Panc1 (cell line): ENCODE measurements at regions of chr6 and their contacts with region 1.

Region 1: DNA sequence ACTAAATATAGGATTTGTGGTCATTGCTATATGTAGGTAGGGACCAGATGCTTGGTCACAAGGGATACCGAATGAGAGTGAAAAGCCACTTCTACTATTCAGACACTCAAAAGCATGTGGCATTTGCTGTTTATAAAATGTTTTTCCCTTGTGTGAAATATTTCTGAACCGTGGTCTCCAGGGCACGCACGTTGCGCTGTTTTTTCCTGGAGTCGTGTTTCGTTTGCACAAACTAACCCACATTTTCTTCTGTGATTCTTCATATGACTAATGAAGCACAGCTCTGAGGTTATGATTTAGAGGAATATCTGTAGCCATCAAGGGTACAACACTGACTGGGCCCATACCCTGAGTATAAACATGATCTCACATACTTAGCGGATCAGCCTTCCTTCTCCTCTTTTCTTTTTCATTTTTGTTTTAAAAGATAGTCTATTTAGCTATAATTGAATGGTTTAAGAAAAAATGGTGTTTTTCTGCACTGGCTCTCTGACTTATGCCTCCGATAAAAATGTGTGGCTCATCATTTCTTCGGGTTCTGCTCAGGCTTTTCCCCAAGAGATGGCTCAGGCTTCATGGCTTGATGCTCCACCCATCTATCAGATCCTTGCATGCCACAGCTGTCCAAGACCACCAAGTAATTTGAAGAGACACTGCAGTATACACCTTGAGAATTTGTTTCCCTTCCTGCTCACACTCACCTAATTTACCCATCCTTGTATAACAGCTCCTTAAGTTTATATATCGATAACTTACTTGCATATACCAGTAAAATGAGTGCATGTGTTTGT is 59.9 kb upstream of the HBS1L start:
- DNase-seq: no peak
- ATAC-seq: no peak
- H3K4me3 ChIP-seq: no peak overlapping the region
- H3K27ac ChIP-seq: no peak overlapping the region
- H3K4me1 ChIP-seq: no peaks in the 10 kb centered on the region
- H3K27me3 ChIP-seq: peaks cover 4% of the 10 kb centered on the region; the same call in 1 of the 2 replicates
- CTCF ChIP-seq: no peak

Region 2: DNA sequence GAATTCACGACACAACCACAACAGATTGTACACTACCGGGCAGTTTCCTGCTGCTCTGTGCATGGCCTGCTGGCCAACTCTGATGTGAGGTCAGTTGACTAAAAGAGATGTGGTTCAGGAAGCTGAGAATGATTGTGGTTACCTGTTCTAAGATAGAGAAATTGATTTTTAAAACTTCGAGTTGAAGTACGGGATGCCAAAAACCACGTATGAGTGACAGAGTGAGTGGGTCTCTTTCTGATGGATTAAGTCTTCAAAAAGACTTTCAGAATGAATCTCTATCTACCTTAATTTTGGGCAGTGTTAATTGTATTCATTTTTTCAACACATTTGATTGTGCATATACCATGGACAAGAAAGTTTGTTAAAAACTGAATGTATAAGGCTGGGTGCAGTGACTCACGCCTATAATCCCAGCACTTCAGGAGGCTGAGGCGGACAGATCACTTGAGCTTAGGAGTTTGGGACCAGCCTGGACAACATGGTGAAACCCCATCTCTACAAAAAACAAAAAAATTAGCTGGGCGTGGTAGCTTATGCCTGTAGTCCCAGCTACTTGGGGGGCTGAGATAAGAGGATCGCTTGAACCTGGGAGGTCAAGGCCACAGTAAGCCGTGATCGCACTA is 917.9 kb before region 1 on chr6:
- CTCF ChIA-PET with region 1: no interaction called
- POLR2A ChIA-PET with region 1: interaction called, 16 read pairs
- in situ Hi-C with region 1: no loop called
- intact Hi-C with region 1: no loop called
- DNase-seq: no peak
- ATAC-seq: no peak
- H3K4me3 ChIP-seq: no peak overlapping the region
- H3K27ac ChIP-seq: no peak overlapping the region
- H3K4me1 ChIP-seq: no peaks in the 10 kb centered on the region
- H3K27me3 ChIP-seq: no peaks in the 10 kb centered on the region
- CTCF ChIP-seq: no peak

Region 3: GRCh38 chr6:135522965-135523692 is 408.6 kb after region 1 on chr6:
- CTCF ChIA-PET with region 1: no interaction called
- POLR2A ChIA-PET with region 1: no interaction called
- in situ Hi-C with region 1: no loop called
- intact Hi-C with region 1: no loop called
- DNase-seq: no peak
- ATAC-seq: no peak
- H3K4me3 ChIP-seq: no peak overlapping the region
- H3K27ac ChIP-seq: no peak overlapping the region
- H3K4me1 ChIP-seq: no peaks in the 10 kb centered on the region
- H3K27me3 ChIP-seq: no peaks in the 10 kb centered on the region
- CTCF ChIP-seq: no peak

Region 4: GRCh38 chr6:135555550-135555949 is 441.0 kb after region 1 on chr6:
- CTCF ChIA-PET with region 1: no interaction called
- POLR2A ChIA-PET with region 1: no interaction called
- in situ Hi-C with region 1: no loop called
- intact Hi-C with region 1: no loop called
- DNase-seq: no peak
- ATAC-seq: no peak
- H3K4me3 ChIP-seq: no peak overlapping the region
- H3K27ac ChIP-seq: no peak overlapping the region
- H3K4me1 ChIP-seq: no peaks in the 10 kb centered on the region
- H3K27me3 ChIP-seq: no peaks in the 10 kb centered on the region
- CTCF ChIP-seq: no peak